ENCODE measurements at regions of chr14 and their contacts with region 1.

Region 1: DNA sequence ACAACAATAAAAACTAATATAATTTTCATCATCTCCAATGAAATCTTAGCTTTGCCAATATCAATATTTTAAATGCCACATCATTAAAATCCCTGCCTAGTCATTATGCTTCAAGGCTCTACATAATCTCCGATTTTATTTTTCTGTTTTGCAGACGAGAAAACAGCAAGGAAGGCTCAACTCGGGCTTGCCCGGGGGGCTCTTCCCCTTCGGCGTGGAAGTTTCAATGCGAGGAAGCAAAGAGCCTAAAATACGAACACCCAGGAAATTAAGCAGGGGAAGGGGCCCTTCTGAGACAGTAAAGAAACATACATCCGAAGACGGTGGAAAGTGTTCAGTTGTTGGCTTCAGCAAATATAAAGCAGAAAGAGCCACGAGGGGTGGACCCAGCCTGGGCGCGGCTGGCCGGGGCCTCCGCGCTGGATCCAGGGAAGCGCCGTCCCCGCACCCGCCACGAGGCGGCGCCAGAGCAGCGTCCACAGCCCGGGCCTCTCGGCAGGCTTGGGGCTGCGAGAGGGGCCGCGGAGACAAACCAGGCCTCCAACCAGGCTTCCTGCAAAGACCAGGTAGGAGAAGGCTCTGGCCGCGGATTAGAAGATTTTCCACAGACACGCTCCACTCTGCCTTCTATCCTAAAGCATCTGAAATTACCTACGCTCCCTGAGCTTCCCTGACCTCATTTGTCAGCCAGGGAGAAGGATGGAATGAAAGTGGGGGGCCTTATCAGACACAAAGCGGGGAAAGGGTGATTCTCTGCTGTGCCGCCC is 77.2 kb downstream of the SERPINA3 start:
- DNase-seq: peak; percentile 50 to 95 (median 77)

Region 2: DNA sequence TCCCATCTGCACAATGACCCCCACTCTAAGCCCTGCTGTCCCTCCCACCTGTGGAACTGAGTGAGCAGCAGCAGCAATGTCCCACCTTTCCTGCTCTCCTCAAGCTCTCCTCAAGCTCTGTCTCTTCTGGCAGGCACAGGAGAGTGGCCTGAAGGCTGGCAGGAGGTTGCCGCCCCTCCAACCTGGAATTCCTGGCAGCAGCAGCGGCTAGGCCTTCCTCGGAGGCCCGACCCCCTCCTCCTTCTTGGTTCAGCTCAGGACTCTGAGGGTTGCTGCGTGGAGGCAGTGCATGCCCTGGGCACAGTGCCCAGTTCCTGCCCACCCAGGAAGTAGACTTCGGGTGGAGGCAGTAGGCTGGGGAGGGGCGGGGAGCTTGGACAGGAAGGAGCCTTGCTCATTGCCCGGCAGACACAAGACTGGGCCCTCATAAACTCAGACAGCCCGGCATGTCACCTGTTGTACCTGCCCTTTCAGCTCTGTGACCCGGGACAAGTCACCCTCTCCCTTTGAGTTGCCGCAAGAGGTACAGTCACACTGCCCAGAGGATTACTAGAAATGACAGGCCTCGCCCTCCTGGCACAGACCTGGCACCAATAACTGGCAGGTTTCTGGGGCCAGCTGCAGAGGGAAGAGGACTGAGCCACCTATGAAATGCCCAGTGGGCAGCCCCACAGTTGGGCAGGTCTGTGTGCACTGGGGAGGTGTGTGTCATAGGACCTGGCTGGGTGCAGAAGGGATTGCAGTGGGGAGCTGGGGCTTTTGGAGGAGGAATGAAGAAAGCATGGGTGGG is 298.8 kb before region 1 on chr14:
- intact Hi-C with region 1: no loop called
- DNase-seq: peak in 5 of 10 donors; percentile 23 to 92 (median 37)

Region 3: DNA sequence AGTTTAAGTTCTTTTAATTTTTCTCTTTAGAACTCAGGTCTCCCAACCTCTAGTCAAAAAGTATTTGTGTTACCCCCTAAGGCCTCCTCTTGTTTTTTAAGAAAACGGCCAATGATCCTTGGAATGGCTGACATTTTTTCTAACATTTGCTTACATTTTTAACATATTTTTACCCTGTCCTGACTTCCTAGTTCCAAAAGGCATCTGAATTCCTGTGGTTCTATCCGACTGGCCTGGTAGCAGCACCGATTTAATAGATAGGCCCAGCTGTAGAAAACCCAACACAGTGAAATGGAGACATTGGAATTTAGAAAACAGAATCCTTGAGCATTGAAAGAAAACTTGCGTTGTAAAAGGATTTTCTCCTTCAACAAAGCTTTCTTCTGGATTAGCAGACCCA is 215.2 kb after region 1 on chr14:
- intact Hi-C with region 1: loop called (anchors 10 kb)
- DNase-seq: no peak

Region 4: DNA sequence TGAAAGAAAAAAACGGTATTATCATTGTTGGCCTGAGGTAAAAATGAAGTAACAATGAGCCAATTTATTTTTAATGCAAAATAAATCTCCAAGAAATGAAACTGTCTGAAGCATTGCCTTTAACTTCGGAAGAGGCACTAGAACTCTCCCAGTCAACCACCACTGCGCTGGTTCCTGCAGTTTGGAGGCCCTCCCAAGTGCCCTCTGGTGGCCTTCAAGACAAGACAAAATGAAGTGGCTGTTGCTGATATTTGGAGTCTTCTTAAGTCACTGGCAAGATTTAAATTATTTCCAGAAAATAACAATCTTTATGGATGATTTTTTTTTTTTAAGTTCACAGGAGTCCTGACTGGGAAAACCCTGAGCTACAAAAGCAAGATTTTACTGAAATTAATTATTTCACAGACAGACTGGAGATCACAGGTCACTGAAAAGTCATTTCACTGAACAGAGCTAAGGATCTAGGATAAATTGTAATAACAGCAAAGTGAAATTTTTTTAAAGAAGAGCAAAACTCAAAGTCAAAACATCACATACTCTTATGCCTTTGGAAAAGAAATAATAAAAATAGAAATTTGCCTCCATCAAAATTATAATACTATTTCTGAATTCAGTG is 409.7 kb after region 1 on chr14:
- intact Hi-C with region 1: loop called (anchors 5 kb)
- DNase-seq: peak in 9 of 10 donors; percentile 36 to 95 (median 60)

Region 5: GRCh38 chr14:95431199-95432143 is 742.1 kb after region 1 on chr14:
- intact Hi-C with region 1: loop called (anchors 5 kb)
- DNase-seq: peak in 2 of 10 donors; percentile 63 to 67